ENCODE measurements at regions of chr10 and their contacts with region 1.

Region 1: DNA sequence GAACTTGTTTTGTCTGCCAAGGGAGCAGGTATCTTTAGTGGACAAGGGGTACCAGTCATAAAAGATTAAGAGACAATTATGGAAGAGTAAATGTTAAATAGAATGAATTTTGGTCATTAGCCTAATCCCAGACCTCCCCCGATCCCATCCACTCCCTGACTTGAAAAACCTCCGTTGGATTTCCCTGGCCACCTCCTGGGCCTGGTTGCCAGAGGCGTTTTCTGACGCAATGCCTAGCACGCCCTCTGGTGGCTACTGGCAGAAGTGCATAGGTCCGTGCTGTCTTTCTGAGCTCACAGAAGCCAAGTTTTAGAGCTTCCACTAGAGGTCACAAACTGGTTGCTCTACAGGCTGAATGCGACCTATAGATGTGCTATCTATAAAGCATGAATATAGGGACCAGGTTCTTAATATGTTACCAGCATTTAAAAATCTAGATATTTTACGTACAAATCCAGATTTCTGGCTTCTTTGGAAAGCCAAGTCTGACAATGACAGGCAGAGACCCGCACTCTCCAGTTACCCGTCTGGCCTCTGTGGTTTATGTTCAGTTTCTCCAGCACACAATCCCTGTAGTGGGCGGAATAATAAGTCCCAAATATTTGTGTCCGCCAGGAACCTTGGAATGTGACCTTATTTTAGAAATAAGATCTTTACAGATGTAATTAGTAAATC is 39.8 kb downstream of the SPOCK2 start:
- DNase-seq: peak; percentile 83 to 98 (median 95)
- H3K4me3 ChIP-seq: no peak overlapping the region
- H3K27ac ChIP-seq: no peak overlapping the region
- H3K4me1 ChIP-seq: peaks cover 0 to 18% of the 10 kb centered on the region in 2 donors
- H3K27me3 ChIP-seq: no peaks in the 10 kb centered on the region
- CTCF ChIP-seq: peak; percentile 99 to 100 (median 100)
- POLR2A ChIP-seq: no peak

Region 2: GRCh38 chr10:71893920-71894319 is 154.7 kb before region 1 on chr10:
- intact Hi-C with region 1: loop called (anchors 5 to 10 kb)
- DNase-seq: no peak
- H3K4me3 ChIP-seq: no peak overlapping the region
- H3K27ac ChIP-seq: no peak overlapping the region
- H3K4me1 ChIP-seq: peaks cover 7 to 9% of the 10 kb centered on the region in 2 donors
- H3K27me3 ChIP-seq: no peaks in the 10 kb centered on the region
- CTCF ChIP-seq: no peak
- POLR2A ChIP-seq: no peak

Region 3: DNA sequence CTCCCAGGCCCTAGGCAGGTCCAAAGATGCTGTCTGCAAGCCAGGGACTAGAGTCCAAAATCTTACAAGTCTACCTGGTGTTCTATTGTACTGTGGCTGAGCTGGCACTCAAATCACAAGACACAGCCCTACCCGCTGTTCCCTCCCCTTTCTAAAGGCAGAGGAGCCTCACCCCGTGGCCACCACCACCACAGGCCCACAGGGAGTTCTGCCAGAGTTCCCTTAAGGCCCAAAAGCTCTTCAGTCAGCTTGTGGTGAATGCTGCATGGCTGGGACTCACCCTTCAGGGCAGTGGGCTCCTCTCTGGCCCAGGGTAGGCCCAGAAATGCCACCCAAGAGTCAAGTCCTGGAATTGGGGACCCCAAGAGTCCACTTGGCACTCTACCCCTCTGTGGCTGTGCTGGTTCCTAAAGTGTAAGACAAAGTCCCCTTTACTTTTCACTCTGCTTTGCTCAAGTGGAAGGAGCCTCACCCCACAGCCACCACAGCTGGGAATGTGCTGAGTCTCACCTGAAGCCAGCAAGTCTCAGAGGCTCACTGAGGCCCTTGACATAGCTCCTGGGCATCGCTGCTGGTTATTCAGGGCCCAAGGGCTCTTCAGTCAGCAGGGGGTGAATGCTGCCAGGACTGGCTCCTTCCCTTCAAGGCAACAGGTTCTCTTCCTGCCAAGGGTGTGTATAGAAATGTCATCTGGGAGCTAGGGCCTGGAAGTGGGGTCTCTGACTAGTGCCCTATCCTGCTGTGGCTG is 148.7 kb before region 1 on chr10:
- intact Hi-C with region 1: loop called (anchors 5 to 10 kb)
- DNase-seq: no peak
- H3K4me3 ChIP-seq: no peak overlapping the region
- H3K27ac ChIP-seq: no peak overlapping the region
- H3K4me1 ChIP-seq: no peaks in the 10 kb centered on the region
- H3K27me3 ChIP-seq: no peaks in the 10 kb centered on the region
- CTCF ChIP-seq: no peak
- POLR2A ChIP-seq: no peak

Region 4: DNA sequence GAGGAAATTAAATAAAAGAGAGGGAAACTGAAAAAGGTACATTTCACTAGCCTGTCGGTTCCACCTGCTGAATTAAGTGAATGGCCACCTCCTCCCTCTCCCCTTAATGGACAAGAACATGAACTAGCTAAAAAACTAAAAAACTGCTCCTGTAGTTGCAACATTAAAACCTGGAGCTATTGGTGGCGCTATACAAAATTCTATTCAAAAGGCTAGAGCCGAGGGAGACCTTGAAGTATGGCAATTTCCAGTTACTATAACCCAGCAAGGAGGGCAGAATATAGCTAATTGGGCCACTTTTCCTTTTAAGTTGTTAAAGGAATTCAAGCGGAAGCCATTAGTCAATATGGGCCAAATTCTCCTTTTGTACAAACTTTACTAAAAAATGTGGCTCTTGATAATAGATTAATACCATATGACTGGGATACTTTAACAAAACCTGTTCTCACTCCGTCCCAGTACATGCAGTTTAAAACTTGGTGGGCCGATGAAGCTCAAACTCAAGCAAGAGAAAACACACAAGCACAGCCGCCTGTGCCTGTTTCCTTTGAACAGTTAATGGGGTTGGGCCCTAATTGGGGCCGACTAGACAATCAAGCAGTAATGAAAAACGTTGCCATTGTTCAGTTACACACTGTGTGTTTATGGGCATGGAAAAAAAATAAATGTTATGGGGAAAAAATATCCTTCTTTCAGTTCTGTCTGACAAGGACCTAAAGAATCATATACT is 90.9 kb before region 1 on chr10:
- intact Hi-C with region 1: loop called (anchors 5 kb)
- DNase-seq: no peak
- H3K4me3 ChIP-seq: no peak overlapping the region
- H3K27ac ChIP-seq: no peak overlapping the region
- H3K4me1 ChIP-seq: peaks cover 0 to 13% of the 10 kb centered on the region in 2 donors
- H3K27me3 ChIP-seq: no peaks in the 10 kb centered on the region
- CTCF ChIP-seq: no peak
- POLR2A ChIP-seq: no peak

Region 5: DNA sequence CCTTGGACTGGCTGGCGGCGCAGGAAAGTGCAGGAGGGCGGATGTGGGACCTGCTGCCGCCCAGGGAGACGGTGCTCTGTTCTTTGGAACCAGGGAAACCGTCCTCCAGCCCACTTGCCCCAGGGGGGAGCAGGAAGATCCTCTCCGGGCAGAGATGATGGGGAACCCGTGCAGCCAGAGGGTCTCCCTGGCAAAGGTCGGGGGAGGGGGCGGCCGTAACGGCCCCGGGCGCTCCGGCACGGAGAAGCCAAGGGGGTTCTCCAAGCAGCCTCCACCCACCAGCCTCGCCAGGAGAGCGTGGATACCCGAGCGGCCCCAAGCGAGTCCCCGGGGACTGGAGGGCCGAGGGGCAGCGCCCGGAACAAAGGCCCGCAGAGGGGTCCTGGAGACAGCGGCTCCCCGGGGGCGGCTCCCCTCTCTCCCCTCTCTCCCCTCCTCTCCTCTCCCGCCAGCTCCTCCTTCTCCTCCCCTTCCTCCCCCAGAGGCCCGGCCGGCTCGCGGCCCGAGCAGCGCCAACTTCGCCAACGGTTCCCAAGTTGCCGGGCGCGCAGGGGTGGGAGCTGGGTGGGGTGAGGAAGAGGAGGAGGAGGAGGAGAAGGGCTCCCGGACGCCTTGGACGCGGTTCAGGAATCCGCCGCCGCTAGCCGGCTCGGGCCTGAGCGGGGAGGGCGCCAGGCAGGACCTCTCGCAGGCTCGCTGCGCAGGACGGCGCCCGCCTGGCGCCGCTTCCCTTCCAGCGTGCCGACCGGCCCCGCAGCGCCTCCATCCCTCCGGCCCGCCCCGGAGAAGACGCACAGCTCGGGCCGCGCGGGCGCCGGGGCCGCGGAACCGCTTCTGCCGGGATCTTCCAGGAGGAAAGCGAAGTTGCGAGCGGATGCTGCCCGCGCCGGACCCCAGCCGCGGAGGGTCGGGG is 84.6 kb before region 1 on chr10 and contains the start of gene CHST3:
- intact Hi-C with region 1: loop called in 1 of 2 experiments (anchors 5 kb)
- DNase-seq: peak; percentile 67 to 81 (median 77)
- H3K4me3 ChIP-seq: peak within 1 kb of the TSS in 3 of 4 donors; percentile 23 to 94 (median 24)
- H3K27ac ChIP-seq: peak within 1 kb of the TSS; percentile 49 to 92 (median 87)
- H3K4me1 ChIP-seq: peaks cover 6 to 45% of the 10 kb centered on the region in 2 donors
- H3K27me3 ChIP-seq: no peaks in the 10 kb centered on the region
- CTCF ChIP-seq: no peak
- POLR2A ChIP-seq: peak; percentile 34 to 67
- total RNA-seq, gene CHST3: 4.8 to 49.7 (median 33.4) TPM

Region 6: GRCh38 chr10:72340510-72341261 is 292.1 kb after region 1 on chr10:
- intact Hi-C with region 1: loop called in 1 of 2 experiments (anchors 5 kb)
- DNase-seq: peak; percentile 62 to 83 (median 80)
- H3K4me3 ChIP-seq: no peak overlapping the region
- H3K27ac ChIP-seq: peak overlapping the region; percentile 0 to 64 (median 51)
- H3K4me1 ChIP-seq: peaks cover 15 to 35% of the 10 kb centered on the region in 2 donors
- H3K27me3 ChIP-seq: no peaks in the 10 kb centered on the region
- CTCF ChIP-seq: peak; percentile 78 to 95 (median 90)
- POLR2A ChIP-seq: no peak